ENCODE measurements at regions of chr6 and their contacts with region 1.

Region 1: DNA sequence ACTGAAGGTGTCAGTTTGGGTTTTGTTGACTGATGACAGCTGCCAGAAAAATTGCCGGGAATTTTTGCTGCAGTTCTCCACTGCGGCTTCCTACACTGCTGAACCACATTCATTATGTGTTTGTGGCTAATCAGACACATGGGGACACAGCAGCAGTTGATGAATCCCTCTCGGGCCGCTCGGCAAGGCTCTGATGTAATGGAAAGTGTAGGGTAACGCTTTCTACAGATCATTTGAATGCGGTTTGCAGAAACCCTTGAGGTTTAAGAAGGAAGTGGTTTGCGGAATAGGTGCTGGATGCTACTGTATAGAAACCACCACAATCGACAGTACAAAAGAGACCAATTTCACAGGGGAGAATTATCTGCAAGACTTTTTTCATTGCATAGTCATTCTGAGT is 138.7 kb upstream of the SASH1 start:
- DNase-seq: peak; percentile 87
- H3K4me3 Mint-ChIP-seq: peak overlapping the region; percentile 48
- H3K27ac Mint-ChIP-seq: peak overlapping the region; percentile 85
- H3K4me1 Mint-ChIP-seq: peaks cover 50% of the 10 kb centered on the region
- H3K27me3 Mint-ChIP-seq: peaks cover 72% of the 10 kb centered on the region

Region 2: DNA sequence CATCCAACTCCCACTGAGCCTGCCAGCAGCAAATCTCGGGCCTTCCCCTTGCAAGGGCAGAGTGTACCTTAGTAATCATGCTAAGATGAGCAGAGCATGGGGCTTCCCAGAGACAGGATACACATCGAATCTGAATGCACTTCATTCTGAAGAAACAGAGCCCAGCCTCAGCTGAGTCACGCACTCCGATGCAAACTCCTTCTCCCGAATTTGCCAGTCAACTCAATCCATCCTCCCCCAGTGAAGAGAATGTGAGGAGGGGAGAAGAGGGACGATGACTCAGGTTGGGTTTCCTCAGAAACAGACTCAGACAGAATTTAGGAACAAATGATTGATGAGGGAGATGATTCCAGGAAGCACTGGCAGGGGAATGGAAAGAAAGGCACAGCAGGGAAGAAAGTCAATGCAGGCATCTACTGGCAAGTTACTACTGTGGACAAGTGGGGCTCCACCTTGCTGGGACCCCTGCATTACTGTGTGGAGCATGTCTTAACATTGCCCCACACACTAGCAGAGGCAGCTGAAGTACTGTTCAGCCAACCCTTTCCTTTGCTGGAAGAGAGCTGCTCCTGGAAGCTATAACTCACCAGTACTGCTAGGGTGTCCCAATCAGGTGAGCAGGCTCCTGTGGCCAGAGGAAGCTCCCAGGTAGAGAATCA is 1353.6 kb before region 1 on chr6:
- CTCF ChIA-PET with region 1: no interaction called
- intact Hi-C with region 1: loop called (anchors 1 kb)
- DNase-seq: peak; percentile 72
- H3K4me3 Mint-ChIP-seq: no peak overlapping the region
- H3K27ac Mint-ChIP-seq: peak overlapping the region; percentile 71
- H3K4me1 Mint-ChIP-seq: peaks cover 31% of the 10 kb centered on the region
- H3K27me3 Mint-ChIP-seq: peaks cover 7% of the 10 kb centered on the region

Region 3: DNA sequence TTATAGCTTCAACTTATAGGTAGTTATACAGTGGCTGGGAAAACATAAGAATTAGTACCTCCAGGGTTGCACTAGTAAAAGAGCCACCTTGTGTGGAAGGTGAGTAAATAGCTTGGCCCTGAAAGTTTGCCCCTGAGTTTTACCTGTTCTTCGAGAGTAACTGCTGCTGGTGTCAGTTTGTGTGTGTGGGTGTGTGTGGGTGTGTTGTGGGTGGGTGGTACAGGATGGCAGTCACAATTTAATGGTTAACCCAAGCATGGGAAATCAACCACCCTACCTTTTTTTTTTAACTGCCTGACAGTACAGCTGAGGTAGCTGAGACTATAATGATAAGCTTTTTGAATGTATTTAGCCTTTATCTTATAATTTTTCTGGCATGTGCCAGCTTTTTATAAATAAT is 862.5 kb before region 1 on chr6:
- CTCF ChIA-PET with region 1: no interaction called
- intact Hi-C with region 1: loop called (anchors 5 kb)
- DNase-seq: no peak
- H3K4me3 Mint-ChIP-seq: no peak overlapping the region
- H3K27ac Mint-ChIP-seq: no peak overlapping the region
- H3K4me1 Mint-ChIP-seq: peaks cover 2% of the 10 kb centered on the region
- H3K27me3 Mint-ChIP-seq: no peaks in the 10 kb centered on the region

Region 4: GRCh38 chr6:148183776-148184175 is 20.2 kb before region 1 on chr6:
- CTCF ChIA-PET with region 1: no interaction called
- intact Hi-C with region 1: loop called (anchors 2 kb)
- DNase-seq: no peak
- H3K4me3 Mint-ChIP-seq: no peak overlapping the region
- H3K27ac Mint-ChIP-seq: no peak overlapping the region
- H3K4me1 Mint-ChIP-seq: no peaks in the 10 kb centered on the region
- H3K27me3 Mint-ChIP-seq: peaks cover 27% of the 10 kb centered on the region

Region 5: GRCh38 chr6:148342357-148343046 is 138.5 kb after region 1 on chr6 and contains the start of gene SASH1:
- CTCF ChIA-PET with region 1: no interaction called
- intact Hi-C with region 1: loop called (anchors 5 kb)
- DNase-seq: peak; percentile 16
- H3K4me3 Mint-ChIP-seq: peak within 1 kb of the TSS; percentile 64
- H3K27ac Mint-ChIP-seq: no peak within 1 kb of the TSS
- H3K4me1 Mint-ChIP-seq: peaks cover 12% of the 10 kb centered on the region
- H3K27me3 Mint-ChIP-seq: peaks cover 52% of the 10 kb centered on the region
- total RNA-seq, gene SASH1: not detected

Region 6: GRCh38 chr6:148440877-148441453 is 237.0 kb after region 1 on chr6:
- CTCF ChIA-PET with region 1: no interaction called
- intact Hi-C with region 1: loop called (anchors 1 kb)
- DNase-seq: no peak
- H3K4me3 Mint-ChIP-seq: no peak overlapping the region
- H3K27ac Mint-ChIP-seq: no peak overlapping the region
- H3K4me1 Mint-ChIP-seq: peaks cover 13% of the 10 kb centered on the region
- H3K27me3 Mint-ChIP-seq: peaks cover 12% of the 10 kb centered on the region

Region 7: DNA sequence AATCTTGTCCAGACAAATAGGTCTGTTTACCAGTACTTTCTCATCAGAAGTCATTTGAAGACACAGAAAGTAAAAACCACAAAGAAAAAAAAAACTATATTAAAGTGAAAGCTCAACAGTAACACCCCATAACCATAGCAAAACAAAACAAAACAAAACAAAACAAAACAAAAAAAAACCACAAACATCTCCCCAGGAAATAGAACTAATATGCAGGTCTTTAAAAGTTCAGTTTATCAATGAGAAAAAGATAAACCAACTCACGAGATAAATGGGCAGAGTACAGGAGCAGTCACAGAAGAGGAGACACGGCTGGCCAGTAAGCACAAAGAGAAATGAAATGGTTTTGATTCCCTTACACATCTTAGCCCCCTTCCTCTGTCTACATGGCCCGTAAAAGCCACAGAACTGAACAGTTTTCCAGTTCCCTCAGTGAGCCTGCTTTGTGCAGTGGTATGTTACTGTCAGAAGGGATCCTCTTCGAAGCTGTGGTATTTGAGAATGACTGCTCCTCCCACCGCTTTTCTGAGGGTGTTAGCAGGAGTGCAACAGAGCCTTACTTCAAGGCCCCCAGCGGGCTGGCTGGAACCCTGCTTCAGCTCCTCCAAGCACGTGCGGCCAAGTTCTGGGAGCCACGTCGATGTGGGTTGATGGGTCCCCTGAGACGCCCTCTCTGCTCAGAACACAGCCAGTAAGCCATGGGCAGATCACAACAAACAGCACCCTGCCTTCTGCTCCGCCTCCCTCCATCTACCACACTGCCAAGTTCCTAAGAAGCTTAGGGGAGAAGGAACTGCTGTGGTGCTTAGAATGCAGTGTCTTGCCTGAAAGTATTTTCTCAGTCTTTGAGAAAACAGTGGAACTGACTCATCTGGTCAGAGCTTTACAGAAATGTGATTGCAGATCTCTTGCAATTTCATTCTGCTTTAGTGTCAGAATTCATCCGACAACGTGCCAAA is 556.9 kb after region 1 on chr6:
- CTCF ChIA-PET with region 1: no interaction called
- intact Hi-C with region 1: loop called (anchors 1 kb)
- DNase-seq: peak; percentile 41
- H3K4me3 Mint-ChIP-seq: peak overlapping the region; percentile 30
- H3K27ac Mint-ChIP-seq: peak overlapping the region; percentile 65
- H3K4me1 Mint-ChIP-seq: peaks cover 37% of the 10 kb centered on the region
- H3K27me3 Mint-ChIP-seq: peaks cover 37% of the 10 kb centered on the region

Measured in activated naive CD4-positive, alpha-beta T cell treated with anti-CD3 and anti-CD28 coated beads for 36 hours (primary cell).